Endothelial cell of umbilical vein (primary cell): ENCODE measurements at regions of chr12 and their contacts with region 1.

Region 1: GRCh38 chr12:117685110-117685926 is 283.5 kb downstream of the KSR2 start:
- DNase-seq: peak; percentile 97
- H3K4me3 ChIP-seq: no peak overlapping the region
- H3K27ac ChIP-seq: peak overlapping the region; percentile 98
- H3K4me1 ChIP-seq: peaks cover 51% of the 10 kb centered on the region
- H3K27me3 ChIP-seq: no peaks in the 10 kb centered on the region
- CTCF ChIP-seq: no peak
- POLR2A ChIP-seq: no peak

Region 2: GRCh38 chr12:117190210-117190781 is 495.0 kb before region 1 on chr12 and contains the start of gene FBXO21:
- CTCF ChIA-PET with region 1: no interaction called
- POLR2A ChIA-PET with region 1: no interaction called
- dilution Hi-C with region 1: no loop called
- intact Hi-C with region 1: loop called (anchors 2 kb)
- DNase-seq: peak; percentile 84
- H3K4me3 ChIP-seq: peak within 1 kb of the TSS; percentile 59 to 100 (median 69)
- H3K27ac ChIP-seq: no peak within 1 kb of the TSS
- H3K4me1 ChIP-seq: peaks cover 9% of the 10 kb centered on the region
- H3K27me3 ChIP-seq: peaks cover 3 to 4% of the 10 kb centered on the region in 2 experiments
- CTCF ChIP-seq: no peak
- POLR2A ChIP-seq: peak; percentile 71
- total RNA-seq, gene FBXO21: 41.6 and 41.7 TPM in 2 replicates

Region 3: DNA sequence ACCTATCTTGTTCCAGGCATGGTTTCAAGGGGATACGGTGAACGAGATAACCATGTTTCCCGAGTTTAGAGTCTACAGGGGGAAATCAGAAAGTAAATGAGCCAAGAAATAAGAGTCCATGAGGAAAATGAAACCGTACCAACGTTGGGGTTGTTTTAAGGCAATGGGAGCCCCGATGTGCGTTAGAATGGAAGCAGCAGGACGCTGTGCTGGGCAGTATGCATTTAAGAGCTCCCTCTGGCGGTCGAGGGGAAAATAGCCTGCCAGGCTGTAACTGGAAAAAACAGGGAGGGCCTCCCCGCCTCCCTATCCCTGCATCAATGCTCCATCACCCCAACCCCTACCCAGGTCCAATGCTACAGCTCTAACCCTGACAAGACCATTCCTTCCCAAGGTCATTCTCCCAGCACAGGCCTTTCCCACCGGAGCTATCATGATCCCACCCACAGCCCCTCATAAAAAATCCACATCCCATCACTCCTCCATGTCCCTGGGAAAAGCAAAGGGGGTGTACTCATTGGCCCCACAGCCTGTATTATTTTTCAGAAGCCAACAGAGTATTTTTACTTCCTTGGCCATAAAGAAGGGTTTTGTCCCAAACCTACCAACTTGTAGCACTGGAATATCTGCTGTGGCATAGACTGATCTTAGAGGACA is 97.6 kb before region 1 on chr12:
- CTCF ChIA-PET with region 1: interaction called, 36 read pairs
- POLR2A ChIA-PET with region 1: no interaction called
- dilution Hi-C with region 1: no loop called
- intact Hi-C with region 1: loop called (anchors 1 kb)
- DNase-seq: peak; percentile 57
- H3K4me3 ChIP-seq: peak overlapping the region in 1 of 3 experiments; percentile 9
- H3K27ac ChIP-seq: no peak overlapping the region
- H3K4me1 ChIP-seq: no peaks in the 10 kb centered on the region
- H3K27me3 ChIP-seq: no peaks in the 10 kb centered on the region
- CTCF ChIP-seq: peak; percentile 83 to 96
- POLR2A ChIP-seq: no peak

Region 4: DNA sequence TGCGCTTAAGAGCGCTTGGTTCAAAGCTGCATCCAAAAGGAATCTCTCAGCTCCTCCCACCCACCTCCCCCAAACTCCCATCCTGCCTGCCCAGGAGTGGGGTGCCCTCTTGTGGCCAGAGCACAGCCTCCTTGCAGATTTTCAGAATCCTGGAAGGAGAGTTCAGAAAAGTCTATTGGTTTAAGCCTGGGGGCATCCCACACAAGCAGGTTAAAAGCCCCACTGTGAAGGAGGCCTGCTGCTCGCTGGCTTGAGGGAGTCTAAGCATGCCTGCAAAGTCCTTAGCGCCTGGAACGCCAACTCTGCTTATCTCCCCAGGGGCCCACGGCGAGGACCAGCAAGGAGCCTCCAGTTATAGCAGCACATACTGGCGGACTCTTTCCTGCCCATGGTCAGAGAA is 13.6 kb before region 1 on chr12:
- CTCF ChIA-PET with region 1: interaction called, 28 read pairs
- POLR2A ChIA-PET with region 1: interaction called, 6 read pairs
- dilution Hi-C with region 1: no loop called
- intact Hi-C with region 1: loop called (anchors 1 kb)
- DNase-seq: peak; percentile 44
- H3K4me3 ChIP-seq: no peak overlapping the region
- H3K27ac ChIP-seq: no peak overlapping the region
- H3K4me1 ChIP-seq: peaks cover 33% of the 10 kb centered on the region
- H3K27me3 ChIP-seq: no peaks in the 10 kb centered on the region
- CTCF ChIP-seq: peak; percentile 39 to 67
- POLR2A ChIP-seq: no peak

Region 5: DNA sequence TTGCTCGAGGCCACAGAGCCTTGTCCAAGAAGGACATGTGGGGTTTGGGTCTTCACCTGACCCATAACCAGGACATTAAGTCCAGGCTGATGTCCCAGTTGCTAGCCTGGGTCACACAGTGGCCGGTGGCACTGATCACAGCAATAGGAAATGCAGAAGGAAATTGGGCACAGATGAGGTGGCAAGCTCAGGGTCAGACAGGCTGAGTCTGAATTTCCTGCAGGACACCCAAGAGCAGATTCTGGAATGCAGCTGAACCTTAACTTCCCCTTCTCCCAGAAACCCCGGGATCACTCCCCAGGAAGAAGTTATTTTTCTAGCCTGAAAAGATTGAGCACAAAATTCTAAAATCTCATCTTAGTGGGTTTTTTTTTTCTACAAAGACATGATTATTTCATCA is 83.5 kb after region 1 on chr12:
- CTCF ChIA-PET with region 1: no interaction called
- POLR2A ChIA-PET with region 1: no interaction called
- dilution Hi-C with region 1: no loop called
- intact Hi-C with region 1: loop called (anchors 1 kb)
- DNase-seq: peak; percentile 21
- H3K4me3 ChIP-seq: no peak overlapping the region
- H3K27ac ChIP-seq: peak overlapping the region; percentile 13
- H3K4me1 ChIP-seq: peaks cover 17% of the 10 kb centered on the region
- H3K27me3 ChIP-seq: no peaks in the 10 kb centered on the region
- CTCF ChIP-seq: no peak
- POLR2A ChIP-seq: no peak

Region 6: GRCh38 chr12:117844114-117844830 is 159.0 kb after region 1 on chr12:
- CTCF ChIA-PET with region 1: no interaction called
- POLR2A ChIA-PET with region 1: no interaction called
- dilution Hi-C with region 1: no loop called
- intact Hi-C with region 1: no loop called
- DNase-seq: no peak
- H3K4me3 ChIP-seq: no peak overlapping the region
- H3K27ac ChIP-seq: no peak overlapping the region
- H3K4me1 ChIP-seq: no peaks in the 10 kb centered on the region
- H3K27me3 ChIP-seq: peaks cover 3 to 4% of the 10 kb centered on the region in 2 experiments
- CTCF ChIP-seq: no peak
- POLR2A ChIP-seq: no peak